ENCODE measurements at regions of chr14 and their contacts with region 1.

Region 1: GRCh38 chr14:32513571-32514009 is 184.5 kb downstream of the AKAP6 start:
- H3K4me3 ChIP-seq: no peak overlapping the region
- H3K27ac ChIP-seq: no peak overlapping the region
- H3K4me1 ChIP-seq: peaks cover 7% of the 10 kb centered on the region
- CTCF ChIP-seq: no peak

Region 2: GRCh38 chr14:32524609-32525375 is 11.2 kb after region 1 on chr14:
- CTCF ChIA-PET with region 1: interaction called, 11 read pairs
- POLR2A ChIA-PET with region 1: no interaction called
- H3K4me3 ChIP-seq: no peak overlapping the region
- H3K27ac ChIP-seq: no peak overlapping the region
- H3K4me1 ChIP-seq: no peaks in the 10 kb centered on the region
- CTCF ChIP-seq: no peak